Activated T-helper 1 cell treated with anti-CD3 and anti-CD28 coated beads, Interleukin-12 subunit alpha, Interleukin-12 subunit beta, Interleukin-2, Interleukin-4 antibody, amounts not matched to agents 30 ng/mL and 10 ng/mL and 1 ng/mL, durations not matched to agents 14 hours and 24 hours and 36 hours (primary cell): ENCODE measurements at regions of chr6 and their contacts with region 1.

Region 1: DNA sequence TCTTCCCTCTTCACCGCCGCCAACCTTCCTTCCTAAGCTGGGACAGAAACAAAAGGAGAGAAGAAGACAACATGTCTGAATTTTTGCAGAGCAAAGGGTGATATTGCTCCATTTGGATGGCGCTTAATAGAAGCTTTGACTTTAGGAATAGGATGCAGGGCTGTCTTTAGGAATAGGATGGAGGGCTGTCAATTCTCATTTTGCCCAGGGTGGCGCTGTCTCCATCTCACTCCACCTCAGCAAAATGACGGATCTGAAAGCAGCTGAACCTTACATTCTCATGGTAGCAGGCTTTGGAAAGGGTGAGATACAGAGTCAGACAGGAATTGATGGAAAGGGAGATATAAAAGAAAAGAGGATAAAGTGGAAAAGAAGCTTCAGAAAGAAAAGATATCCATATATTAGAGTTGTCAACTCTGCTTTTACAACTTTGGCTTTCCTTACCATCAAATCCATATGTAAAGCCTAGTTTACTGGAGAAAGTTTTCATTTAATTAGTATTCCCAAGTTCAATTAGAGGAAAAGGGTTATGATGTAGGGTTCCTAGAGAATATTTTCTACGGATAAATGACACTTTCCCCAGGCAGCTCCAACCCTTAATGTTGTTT is 2.4 kb downstream of the MTCL3 start:
- DNase-seq: peak; percentile 48
- H3K4me3 Mint-ChIP-seq: peak overlapping the region; percentile 90
- H3K27ac Mint-ChIP-seq: peak overlapping the region; percentile 70
- H3K4me1 Mint-ChIP-seq: peaks cover 54% of the 10 kb centered on the region
- H3K27me3 Mint-ChIP-seq: peaks cover 14% of the 10 kb centered on the region

Region 2: DNA sequence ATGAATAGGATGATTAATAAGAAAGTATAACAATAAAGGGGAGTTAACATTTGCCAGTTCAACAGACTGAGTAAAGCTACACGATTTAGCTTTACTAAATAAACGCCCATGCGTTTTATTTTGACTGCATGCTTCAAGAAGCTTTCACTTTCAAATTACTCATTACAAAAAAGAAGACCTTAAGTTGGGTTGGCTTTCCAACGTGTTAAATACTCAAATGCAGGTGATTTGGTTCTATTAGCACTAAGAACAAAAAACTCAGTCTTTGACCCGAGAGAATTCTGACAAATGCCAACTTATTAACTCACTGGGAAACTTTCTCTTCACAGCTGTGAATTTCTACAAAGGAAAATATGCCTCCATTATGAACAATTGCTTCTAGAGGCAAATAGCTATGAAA is 225.3 kb before region 1 on chr6:
- intact Hi-C with region 1: loop called (anchors 1 kb)
- DNase-seq: no peak
- H3K4me3 Mint-ChIP-seq: peak overlapping the region; percentile 8
- H3K27ac Mint-ChIP-seq: peak overlapping the region; percentile 77
- H3K4me1 Mint-ChIP-seq: peaks cover 32% of the 10 kb centered on the region
- H3K27me3 Mint-ChIP-seq: no peaks in the 10 kb centered on the region

Region 3: DNA sequence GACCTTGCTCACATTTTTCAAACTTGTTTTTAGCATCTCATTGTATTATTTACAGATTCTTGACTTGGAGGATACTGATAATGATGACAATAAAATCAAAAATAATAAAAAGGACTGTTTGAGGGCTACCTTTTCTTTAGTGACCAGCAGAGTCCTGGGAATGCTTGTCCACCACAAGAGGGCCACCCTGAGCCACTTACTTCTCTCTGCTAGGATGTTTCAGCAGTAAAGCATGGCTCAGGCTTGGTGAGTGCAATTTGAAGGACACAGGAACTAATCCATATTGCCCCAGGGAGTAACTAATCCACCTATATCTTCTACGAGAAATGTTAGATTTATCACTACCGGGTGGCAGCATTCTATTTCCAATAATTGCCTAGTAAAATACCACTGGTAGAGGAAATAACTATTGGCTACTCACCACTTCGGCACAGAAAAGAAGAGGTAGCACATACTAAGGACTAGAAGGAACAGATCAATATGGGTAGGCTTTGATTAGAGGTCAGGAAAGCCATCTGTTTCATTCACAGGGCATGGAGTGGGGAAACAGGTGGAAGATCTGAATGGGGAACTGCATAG is 51.8 kb before region 1 on chr6:
- intact Hi-C with region 1: loop called (anchors 1 kb)
- DNase-seq: peak; percentile 36
- H3K4me3 Mint-ChIP-seq: no peak overlapping the region
- H3K27ac Mint-ChIP-seq: no peak overlapping the region
- H3K4me1 Mint-ChIP-seq: peaks cover 9% of the 10 kb centered on the region
- H3K27me3 Mint-ChIP-seq: peaks cover under 1% of the 10 kb centered on the region

Region 4: DNA sequence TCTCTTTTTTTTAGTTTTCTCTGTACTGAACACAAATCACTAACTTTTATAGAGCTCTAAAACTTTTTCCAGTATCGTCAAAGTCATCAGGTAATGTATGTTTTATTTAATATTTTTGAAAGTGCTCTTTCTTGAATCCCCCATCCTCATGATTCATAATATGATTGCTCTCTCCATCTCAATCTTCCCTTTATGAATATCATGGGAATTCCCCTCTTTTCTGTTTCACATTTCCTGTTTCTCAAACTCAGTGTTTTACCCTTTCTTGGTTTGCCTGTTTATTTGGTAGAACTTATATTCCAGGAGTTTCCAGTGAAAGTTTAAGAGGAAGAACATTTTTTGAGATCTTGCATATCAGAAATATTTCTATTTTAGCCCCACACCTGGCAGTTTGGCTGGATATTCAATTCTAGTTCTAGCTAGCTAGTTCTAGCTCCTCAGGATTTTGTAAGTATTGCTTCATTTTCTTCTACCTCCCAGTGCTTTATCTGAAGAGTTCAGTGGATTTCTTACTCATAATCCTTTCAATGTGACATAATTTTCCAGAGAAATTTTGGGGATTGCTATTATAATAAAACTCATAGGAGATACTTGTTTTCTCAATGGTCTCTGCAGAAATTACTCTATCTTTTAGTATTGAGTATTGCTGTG is 54.1 kb after region 1 on chr6:
- intact Hi-C with region 1: loop called (anchors 2 kb)
- DNase-seq: no peak
- H3K4me3 Mint-ChIP-seq: no peak overlapping the region
- H3K27ac Mint-ChIP-seq: no peak overlapping the region
- H3K4me1 Mint-ChIP-seq: peaks cover 12% of the 10 kb centered on the region
- H3K27me3 Mint-ChIP-seq: peaks cover 6% of the 10 kb centered on the region

Region 5: DNA sequence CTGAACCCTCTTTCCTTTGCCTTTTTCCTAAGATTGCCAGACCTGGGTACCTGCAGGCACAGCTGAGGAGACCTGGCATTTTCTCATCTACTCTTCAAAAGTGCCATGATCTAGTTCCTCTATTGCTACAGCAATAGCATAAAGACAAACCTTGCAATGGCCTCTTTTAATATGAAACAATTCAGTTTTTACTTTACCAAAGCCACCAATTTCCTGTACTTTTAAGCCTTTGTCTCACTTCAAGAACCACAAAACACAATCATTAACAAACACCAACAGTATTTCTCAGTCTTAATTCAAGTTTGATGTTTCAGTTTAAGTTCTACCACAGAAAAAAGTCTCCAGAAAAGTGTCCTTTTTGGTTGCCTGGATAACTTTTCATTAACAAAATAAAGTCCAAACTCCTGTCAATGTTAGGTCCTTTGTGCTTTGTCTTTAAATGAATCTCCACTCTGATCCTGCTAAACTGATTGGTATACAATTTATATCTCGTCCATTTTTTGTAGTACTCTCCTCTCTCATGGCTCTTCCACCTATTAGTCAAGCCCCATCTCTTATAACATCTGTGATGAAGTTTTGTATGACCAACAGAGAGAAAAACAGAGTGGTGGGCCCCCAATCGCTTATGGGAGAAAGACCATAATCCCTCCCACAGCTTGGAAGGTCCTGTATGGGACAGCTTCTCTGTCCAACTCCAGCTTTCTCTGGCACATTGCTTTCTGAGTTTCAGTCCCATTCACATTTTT is 434.6 kb after region 1 on chr6:
- intact Hi-C with region 1: no loop called
- DNase-seq: no peak
- H3K4me3 Mint-ChIP-seq: peak overlapping the region; percentile 32
- H3K27ac Mint-ChIP-seq: peak overlapping the region; percentile 85
- H3K4me1 Mint-ChIP-seq: peaks cover 43% of the 10 kb centered on the region
- H3K27me3 Mint-ChIP-seq: no peaks in the 10 kb centered on the region